Cardiac septum (tissue), 1 donor: ENCODE measurements at regions of chr5 and their contacts with region 1.

Region 1: GRCh38 chr5:41843456-41844370 is 26.5 kb downstream of the OXCT1 start:
- DNase-seq: no peak

Region 2: DNA sequence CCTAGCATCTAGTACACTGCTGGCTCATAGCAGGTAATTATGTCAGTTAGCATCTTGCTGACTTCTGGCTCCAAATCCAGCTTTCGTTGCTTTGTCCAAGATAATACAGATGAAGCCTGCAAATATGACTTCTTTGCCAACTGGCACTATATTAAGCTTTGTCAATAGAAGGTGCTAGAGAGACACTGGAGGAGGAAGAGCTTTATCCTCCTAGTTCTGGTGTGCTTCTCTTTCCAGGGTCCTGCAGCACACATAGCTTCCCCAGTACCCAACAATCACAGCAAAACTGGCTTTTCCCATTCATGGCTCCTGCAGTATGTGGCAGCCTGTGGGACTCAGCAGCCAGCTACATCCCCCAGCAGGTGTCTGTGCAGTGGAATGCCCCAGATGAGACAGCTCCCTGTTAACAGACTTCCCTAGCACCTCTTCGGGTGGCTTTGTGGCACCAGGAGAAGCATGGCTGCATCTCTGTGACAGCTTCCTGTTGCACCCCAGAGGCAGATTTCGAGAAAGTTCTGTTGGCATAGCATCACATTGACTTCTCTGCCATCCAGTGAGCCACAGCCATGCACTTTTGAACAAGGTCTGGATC is 121.3 kb before region 1 on chr5:
- intact Hi-C with region 1: loop called (anchors 10 kb)
- DNase-seq: no peak

Region 3: DNA sequence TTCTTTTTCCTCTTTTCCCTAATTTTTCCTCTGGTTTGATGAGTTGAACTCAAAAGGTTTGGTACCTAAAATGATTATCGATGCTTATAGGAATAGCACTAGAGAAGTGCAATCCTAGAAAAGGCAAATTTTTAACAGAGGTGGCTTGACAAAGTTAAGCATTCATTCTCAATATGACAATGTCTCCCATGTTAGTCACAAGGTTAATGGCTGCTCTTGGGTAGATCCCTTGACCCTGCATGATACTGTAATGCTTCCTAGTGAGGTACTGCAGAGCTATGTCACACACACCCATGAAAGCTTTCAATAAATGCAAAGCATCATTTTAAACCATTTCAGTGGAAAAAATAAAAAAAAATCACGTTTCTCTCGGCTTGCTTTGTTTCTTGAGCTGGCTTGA is 123.0 kb after region 1 on chr5:
- intact Hi-C with region 1: no loop called
- DNase-seq: no peak